ENCODE measurements at regions of chr9 and their contacts with region 1.

Region 1: GRCh38 chr9:19925817-19926503 is 137.1 kb upstream of the SLC24A2 start:
- DNase-seq: peak; percentile 62 to 65
- H3K4me3 ChIP-seq: peak overlapping the region in 1 of 3 donors; percentile 4
- H3K27ac ChIP-seq: no peak overlapping the region
- H3K4me1 ChIP-seq: no peaks in the 10 kb centered on the region
- H3K27me3 ChIP-seq: no peaks in the 10 kb centered on the region
- CTCF ChIP-seq: peak; percentile 79 to 97 (median 94)
- POLR2A ChIP-seq: no peak

Region 2: DNA sequence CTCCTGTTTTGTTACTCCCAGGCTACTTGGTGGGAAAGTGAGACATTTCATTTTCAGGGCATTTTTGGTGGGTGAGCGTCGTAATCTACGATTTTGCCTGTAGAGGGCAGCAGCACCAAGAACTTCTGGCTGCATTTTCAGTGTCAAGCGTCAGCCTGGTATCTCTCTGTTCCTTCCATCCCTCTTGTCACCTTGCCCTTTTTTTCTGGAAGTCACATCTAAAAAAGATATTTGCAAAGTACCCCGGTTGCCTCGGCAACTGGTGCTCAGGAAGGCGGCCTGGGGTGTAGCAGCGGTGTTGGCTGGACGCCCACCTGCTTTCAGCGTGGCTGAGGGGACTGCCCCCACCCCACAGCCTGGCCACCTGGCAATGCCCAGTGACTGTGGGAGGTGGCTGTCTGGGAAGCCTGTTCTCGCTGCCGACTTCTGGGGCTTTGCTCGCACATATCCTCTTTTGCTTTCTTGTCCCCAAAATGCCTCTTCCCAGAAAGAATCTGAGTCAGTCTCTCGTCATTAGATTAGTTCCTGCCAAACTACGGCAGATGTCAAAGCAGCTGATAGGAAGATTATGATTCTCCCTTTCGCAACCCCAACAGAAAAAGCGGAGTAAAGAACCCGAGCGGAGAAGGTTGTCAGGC is 432.7 kb before region 1 on chr9:
- intact Hi-C with region 1: loop called (anchors 10 kb)
- DNase-seq: peak; percentile 38 to 54
- H3K4me3 ChIP-seq: no peak overlapping the region
- H3K27ac ChIP-seq: no peak overlapping the region
- H3K4me1 ChIP-seq: peaks cover 0 to 4% of the 10 kb centered on the region in 2 donors
- H3K27me3 ChIP-seq: no peaks in the 10 kb centered on the region
- CTCF ChIP-seq: peak; percentile 50 to 71 (median 60)
- POLR2A ChIP-seq: no peak

Region 3: DNA sequence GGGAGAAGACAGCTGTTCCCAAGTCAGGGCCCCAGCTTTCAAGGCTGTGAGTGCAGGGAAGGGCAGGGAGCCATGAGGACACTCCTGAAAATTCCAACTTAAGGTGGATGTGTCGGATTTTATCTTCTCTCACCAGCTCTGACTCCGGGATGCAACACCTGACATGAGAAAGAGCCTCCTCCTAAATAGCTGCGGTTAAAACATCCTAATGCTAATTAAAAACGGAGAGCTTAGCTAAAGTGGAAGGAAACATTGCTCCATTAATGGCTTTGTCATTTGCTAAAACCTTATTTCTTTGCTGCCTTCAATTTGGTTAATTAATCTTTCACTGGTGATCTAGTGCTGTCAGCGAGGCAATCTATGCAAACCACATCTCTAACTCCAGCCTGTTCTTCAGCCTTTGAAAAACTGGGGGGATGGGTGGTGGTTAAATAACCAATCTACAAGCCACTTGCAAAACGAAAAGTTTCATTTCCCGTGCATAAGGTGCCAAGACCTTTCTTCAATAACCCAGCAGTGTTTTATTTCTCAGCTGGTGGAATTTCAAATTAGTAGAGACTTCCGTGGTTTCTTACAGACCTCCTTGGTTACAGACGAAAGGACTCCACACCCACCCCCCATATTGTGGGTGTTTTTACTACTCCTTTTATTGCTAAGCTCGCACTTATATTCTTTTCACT is 316.7 kb after region 1 on chr9:
- intact Hi-C with region 1: no loop called
- DNase-seq: no peak
- H3K4me3 ChIP-seq: no peak overlapping the region
- H3K27ac ChIP-seq: no peak overlapping the region
- H3K4me1 ChIP-seq: peaks cover 0 to 5% of the 10 kb centered on the region in 2 donors
- H3K27me3 ChIP-seq: no peaks in the 10 kb centered on the region
- CTCF ChIP-seq: no peak
- POLR2A ChIP-seq: no peak

Region 4: GRCh38 chr9:21102305-21102704 is 1176.3 kb after region 1 on chr9:
- intact Hi-C with region 1: loop called (anchors 10 kb)
- DNase-seq: no peak
- H3K4me3 ChIP-seq: no peak overlapping the region
- H3K27ac ChIP-seq: no peak overlapping the region
- H3K4me1 ChIP-seq: peaks cover 0 to under 1% of the 10 kb centered on the region in 2 donors
- H3K27me3 ChIP-seq: no peaks in the 10 kb centered on the region
- CTCF ChIP-seq: no peak
- POLR2A ChIP-seq: no peak